Activated naive CD4-positive, alpha-beta T cell treated with anti-CD3 and anti-CD28 coated beads, Interleukin-2, amount 10 ng/mL, durations not matched to agents 7 days and 5 days (primary cell): ENCODE measurements at regions of chr4 and their contacts with region 1.

Region 1: GRCh38 chr4:20773144-20773997 is 73.1 kb downstream of the PACRGL start:
- DNase-seq: peak; percentile 27
- H3K4me3 Mint-ChIP-seq: no peak overlapping the region
- H3K27ac Mint-ChIP-seq: no peak overlapping the region
- H3K4me1 Mint-ChIP-seq: no peaks in the 10 kb centered on the region
- H3K27me3 Mint-ChIP-seq: peaks cover 4% of the 10 kb centered on the region

Region 2: DNA sequence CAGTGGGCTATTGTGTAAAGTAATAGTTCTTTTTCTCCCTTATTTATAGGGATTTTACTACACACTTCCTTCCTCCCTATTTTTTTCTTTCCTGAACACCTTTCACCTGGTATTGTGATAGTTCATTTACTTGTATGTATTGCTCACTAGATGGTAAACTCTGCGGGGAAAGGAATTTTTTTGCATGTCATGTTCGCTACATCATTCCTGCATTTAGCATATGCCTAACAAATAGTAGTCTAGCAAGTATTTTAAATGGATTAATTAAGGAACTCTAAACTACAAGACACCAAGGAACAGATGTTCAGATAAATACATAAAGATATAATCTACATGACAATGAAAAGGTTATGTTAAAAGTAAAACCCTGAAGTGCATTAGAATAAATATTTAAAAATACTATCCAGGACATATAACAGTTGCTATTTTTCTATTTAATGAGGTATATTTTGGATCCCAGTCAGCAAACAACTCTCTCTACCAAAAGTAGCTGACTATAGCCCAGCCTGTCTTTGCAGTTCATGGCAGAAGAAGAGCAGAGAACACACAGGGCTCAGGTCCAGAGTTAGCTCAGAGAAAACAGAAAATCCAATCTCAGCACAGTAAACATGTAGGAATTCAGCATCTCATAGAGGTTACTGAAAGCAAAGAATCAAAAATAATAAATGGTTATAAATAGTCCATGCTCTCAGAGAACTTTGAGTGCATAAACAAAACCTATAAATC is 14.7 kb after region 1 on chr4:
- CTCF ChIA-PET with region 1: interaction called, 10 read pairs
- DNase-seq: no peak
- H3K4me3 Mint-ChIP-seq: no peak overlapping the region
- H3K27ac Mint-ChIP-seq: no peak overlapping the region
- H3K4me1 Mint-ChIP-seq: no peaks in the 10 kb centered on the region
- H3K27me3 Mint-ChIP-seq: no peaks in the 10 kb centered on the region

Region 3: GRCh38 chr4:20809812-20810211 is 36.4 kb after region 1 on chr4:
- CTCF ChIA-PET with region 1: no interaction called
- DNase-seq: no peak
- H3K4me3 Mint-ChIP-seq: no peak overlapping the region
- H3K27ac Mint-ChIP-seq: no peak overlapping the region
- H3K4me1 Mint-ChIP-seq: no peaks in the 10 kb centered on the region
- H3K27me3 Mint-ChIP-seq: no peaks in the 10 kb centered on the region

Region 4: GRCh38 chr4:21041708-21042107 is 268.3 kb after region 1 on chr4:
- CTCF ChIA-PET with region 1: no interaction called
- DNase-seq: no peak
- H3K4me3 Mint-ChIP-seq: no peak overlapping the region
- H3K27ac Mint-ChIP-seq: no peak overlapping the region
- H3K4me1 Mint-ChIP-seq: no peaks in the 10 kb centered on the region
- H3K27me3 Mint-ChIP-seq: no peaks in the 10 kb centered on the region

Region 5: GRCh38 chr4:21469438-21470300 is 696.3 kb after region 1 on chr4:
- CTCF ChIA-PET with region 1: interaction called, 19 read pairs
- DNase-seq: no peak
- H3K4me3 Mint-ChIP-seq: no peak overlapping the region
- H3K27ac Mint-ChIP-seq: no peak overlapping the region
- H3K4me1 Mint-ChIP-seq: no peaks in the 10 kb centered on the region
- H3K27me3 Mint-ChIP-seq: no peaks in the 10 kb centered on the region

Region 6: GRCh38 chr4:21765810-21766407 is 992.5 kb after region 1 on chr4:
- CTCF ChIA-PET with region 1: interaction called, 24 read pairs
- DNase-seq: peak; percentile 43
- H3K4me3 Mint-ChIP-seq: no peak overlapping the region
- H3K27ac Mint-ChIP-seq: no peak overlapping the region
- H3K4me1 Mint-ChIP-seq: peaks cover 5% of the 10 kb centered on the region
- H3K27me3 Mint-ChIP-seq: no peaks in the 10 kb centered on the region